Activated CD4-positive, alpha-beta memory T cell treated with anti-CD3 and anti-CD28 coated beads, Interleukin-2, amount 10 ng/mL, durations not matched to agents 7 days and 5 days (primary cell): ENCODE measurements at regions of chr5 and their contacts with region 1.

Region 1: GRCh38 chr5:149228618-149229297 is 42.9 kb upstream of the AFAP1L1 start:
- DNase-seq: no peak
- H3K4me3 Mint-ChIP-seq: no peak overlapping the region
- H3K27ac Mint-ChIP-seq: no peak overlapping the region
- H3K4me1 Mint-ChIP-seq: peaks cover 16% of the 10 kb centered on the region
- H3K27me3 Mint-ChIP-seq: peaks cover 15% of the 10 kb centered on the region

Region 2: DNA sequence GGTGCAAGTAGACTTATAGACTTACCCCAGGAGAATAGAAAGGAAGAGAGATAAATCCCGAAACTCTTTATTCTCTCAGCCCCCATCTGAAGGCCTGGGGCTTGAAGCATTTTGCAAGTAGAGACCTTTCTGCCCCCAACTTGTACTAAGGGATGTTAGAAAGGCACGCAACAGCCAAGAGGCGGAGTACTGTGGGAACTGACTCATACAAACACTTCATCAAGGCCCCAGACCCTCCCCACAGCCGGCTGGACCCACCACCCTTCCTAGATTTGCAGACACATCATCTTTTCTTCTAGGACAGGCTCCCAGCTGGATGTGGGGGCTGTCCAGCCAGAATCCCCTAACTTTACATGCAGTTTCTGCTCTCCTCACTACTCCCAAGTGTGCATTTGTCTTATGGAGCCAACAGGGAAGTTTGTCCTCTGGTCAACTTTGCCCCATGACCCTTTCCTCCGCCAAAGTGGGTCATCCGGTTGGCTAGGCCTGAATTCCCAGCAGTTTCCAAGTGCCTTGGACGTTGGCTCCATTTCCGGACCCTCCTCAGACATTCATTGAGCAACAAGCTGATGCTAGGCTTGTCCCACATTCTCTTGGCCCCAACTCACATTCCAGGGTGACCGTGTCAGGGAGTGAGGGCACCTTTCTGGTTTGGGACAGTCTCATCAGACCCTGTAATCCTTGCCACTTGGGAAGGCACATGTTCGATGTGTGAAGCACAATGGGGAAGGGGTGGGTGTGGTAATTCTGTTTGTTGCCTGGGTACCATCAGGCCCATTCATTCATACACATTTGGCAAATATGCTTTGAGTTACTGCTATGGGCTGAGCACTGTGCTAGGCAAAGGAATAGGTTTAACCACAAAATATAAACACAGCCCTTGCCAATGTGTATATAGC is 22.9 kb before region 1 on chr5:
- CTCF ChIA-PET with region 1: no interaction called
- POLR2A ChIA-PET with region 1: no interaction called
- DNase-seq: no peak
- H3K4me3 Mint-ChIP-seq: no peak overlapping the region
- H3K27ac Mint-ChIP-seq: no peak overlapping the region
- H3K4me1 Mint-ChIP-seq: no peaks in the 10 kb centered on the region
- H3K27me3 Mint-ChIP-seq: no peaks in the 10 kb centered on the region

Region 3: DNA sequence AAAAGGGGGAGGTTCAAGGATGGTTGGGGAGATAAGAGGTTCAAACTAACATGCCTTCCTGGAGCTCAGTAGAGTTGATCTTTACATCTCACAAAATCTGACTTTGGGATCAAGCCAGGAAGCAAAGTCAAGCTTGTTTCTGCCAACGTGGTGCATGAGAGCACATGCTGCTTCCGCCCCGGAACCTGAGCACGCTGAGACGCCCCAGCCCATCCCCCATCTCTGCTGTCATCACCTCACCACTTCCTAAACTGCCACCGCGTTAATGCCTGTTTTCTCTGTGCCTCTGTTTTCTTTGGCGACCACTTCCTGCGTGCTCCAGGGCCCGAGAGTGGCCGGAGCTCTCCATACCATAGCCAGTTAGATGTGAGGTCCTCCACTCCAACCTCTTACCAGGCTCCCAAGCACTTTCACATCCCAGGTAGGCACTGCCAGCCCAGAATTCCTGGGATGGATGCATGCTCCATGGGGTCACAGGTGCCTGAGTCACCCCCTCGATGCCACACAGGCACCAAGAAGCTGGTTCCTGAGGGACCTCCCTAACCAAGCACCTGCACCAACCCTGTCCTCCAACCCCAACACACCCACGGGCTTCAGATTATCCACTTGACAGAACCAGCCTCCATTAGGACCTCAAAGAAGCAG is 11.7 kb after region 1 on chr5:
- CTCF ChIA-PET with region 1: no interaction called
- POLR2A ChIA-PET with region 1: interaction called, 10 read pairs
- DNase-seq: peak; percentile 94
- H3K4me3 Mint-ChIP-seq: peak overlapping the region; percentile 24
- H3K27ac Mint-ChIP-seq: peak overlapping the region; percentile 85
- H3K4me1 Mint-ChIP-seq: peaks cover 36% of the 10 kb centered on the region
- H3K27me3 Mint-ChIP-seq: peaks cover 13% of the 10 kb centered on the region

Region 4: DNA sequence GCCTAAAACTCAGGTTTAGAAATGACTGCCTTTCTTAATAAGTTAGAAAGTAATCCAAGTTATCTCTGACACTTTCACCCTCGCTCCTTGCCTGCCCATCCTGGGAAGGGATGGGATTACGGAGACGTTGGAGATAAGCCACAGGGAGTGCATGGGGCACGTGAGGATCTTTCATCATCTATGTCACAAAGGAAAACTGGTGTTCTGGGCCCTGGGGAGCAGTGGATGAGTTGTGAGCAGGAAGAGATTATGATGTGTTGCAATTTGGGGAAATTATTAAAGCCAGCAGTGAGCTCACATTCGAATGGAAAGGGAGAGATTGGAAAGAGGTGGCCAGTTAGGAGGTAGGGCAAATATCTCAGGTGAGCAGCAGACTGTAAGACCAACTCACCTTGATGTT is 55.7 kb after region 1 on chr5:
- CTCF ChIA-PET with region 1: no interaction called
- POLR2A ChIA-PET with region 1: no interaction called
- DNase-seq: no peak
- H3K4me3 Mint-ChIP-seq: no peak overlapping the region
- H3K27ac Mint-ChIP-seq: no peak overlapping the region
- H3K4me1 Mint-ChIP-seq: no peaks in the 10 kb centered on the region
- H3K27me3 Mint-ChIP-seq: peaks cover 11% of the 10 kb centered on the region

Region 5: GRCh38 chr5:149317281-149318048 is 88.7 kb after region 1 on chr5:
- CTCF ChIA-PET with region 1: no interaction called
- POLR2A ChIA-PET with region 1: no interaction called
- DNase-seq: peak; percentile 45
- H3K4me3 Mint-ChIP-seq: no peak overlapping the region
- H3K27ac Mint-ChIP-seq: no peak overlapping the region
- H3K4me1 Mint-ChIP-seq: peaks cover 2% of the 10 kb centered on the region
- H3K27me3 Mint-ChIP-seq: no peaks in the 10 kb centered on the region

Region 6: GRCh38 chr5:149367249-149367971 is 138.7 kb after region 1 on chr5:
- CTCF ChIA-PET with region 1: no interaction called
- POLR2A ChIA-PET with region 1: no interaction called
- DNase-seq: peak; percentile 63
- H3K4me3 Mint-ChIP-seq: no peak overlapping the region
- H3K27ac Mint-ChIP-seq: no peak overlapping the region
- H3K4me1 Mint-ChIP-seq: peaks cover 6% of the 10 kb centered on the region
- H3K27me3 Mint-ChIP-seq: no peaks in the 10 kb centered on the region